GM18951 (cell line): ENCODE measurements at regions of chr1 and their contacts with region 1.

Region 1: DNA sequence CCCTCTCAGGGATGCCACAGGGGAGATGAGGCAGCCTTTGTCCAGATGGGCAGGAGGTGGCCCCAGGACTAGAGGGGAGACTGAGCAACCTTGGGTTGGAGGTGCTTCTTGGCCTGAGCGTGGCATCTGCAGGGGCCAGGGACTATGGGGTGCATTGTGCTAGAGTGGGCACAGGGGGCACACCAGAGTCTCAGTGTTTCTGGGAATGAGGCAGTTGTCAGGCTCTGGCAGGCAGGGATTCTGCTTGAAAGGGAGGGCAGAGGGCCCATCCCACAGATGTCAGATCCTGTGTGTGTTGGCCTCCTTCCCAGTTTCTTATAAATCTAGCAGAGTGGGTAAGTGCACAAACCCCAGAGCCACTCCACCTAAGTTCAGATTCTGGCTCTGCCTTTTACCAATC is 13.7 kb downstream of the LGR6 start:
- POLR2A ChIP-seq: no peak

Region 2: GRCh38 chr1:201946224-201946908 is 260.9 kb before region 1 on chr1 and contains the start of gene LMOD1:
- in situ Hi-C with region 1: no loop called
- POLR2A ChIP-seq: no peak

Region 3: DNA sequence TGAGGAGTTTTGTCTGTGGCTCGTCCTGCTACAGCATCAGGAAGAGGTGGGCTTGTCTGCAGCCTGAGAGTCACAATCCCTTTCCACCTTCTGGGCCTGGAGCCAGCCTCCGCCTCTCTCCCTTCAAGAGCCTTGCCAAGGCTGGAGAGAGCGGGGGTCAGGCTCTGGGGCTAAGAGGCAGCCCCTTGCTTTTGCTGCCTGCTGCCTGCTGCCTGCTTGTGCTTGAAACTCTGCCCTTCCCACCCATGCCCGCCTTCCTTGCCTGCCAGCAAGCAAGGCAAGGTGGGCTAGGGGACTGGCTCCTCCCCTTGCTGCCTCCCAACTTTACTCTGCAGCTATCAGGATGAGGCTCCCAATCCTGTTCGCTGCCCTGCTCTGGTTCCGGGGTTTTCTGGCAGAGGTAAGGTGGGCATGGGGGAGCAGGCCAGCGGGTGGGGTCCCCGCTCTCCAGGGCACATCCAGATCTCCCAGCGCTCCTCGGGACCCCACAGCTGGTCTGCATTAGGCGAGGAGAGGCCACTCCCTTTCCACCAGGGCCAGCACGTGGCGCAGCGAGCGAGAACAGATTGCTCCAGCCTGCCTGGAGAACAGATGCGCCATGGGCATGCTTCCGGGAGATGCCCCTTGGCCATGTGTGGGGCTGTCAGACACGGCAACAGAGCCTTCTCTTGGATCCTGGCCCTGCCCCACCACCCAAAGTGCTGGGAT is 39.4 kb before region 1 on chr1:
- in situ Hi-C with region 1: no loop called
- POLR2A ChIP-seq: no peak

Region 4: GRCh38 chr1:202329891-202330290 is 122.6 kb after region 1 on chr1:
- in situ Hi-C with region 1: loop called (anchors 10 kb)
- POLR2A ChIP-seq: no peak